ENCODE measurements at regions of chr5 and their contacts with region 1.

Region 1: GRCh38 chr5:54310433-54311175 is at the start of gene ARL15:
- DNase-seq: peak; percentile 98
- CTCF ChIP-seq: no peak

Region 2: GRCh38 chr5:53913941-53914340 is 396.7 kb before region 1 on chr5:
- CTCF ChIA-PET with region 1: no interaction called
- POLR2A ChIA-PET with region 1: no interaction called
- DNase-seq: no peak
- CTCF ChIP-seq: no peak

Region 3: DNA sequence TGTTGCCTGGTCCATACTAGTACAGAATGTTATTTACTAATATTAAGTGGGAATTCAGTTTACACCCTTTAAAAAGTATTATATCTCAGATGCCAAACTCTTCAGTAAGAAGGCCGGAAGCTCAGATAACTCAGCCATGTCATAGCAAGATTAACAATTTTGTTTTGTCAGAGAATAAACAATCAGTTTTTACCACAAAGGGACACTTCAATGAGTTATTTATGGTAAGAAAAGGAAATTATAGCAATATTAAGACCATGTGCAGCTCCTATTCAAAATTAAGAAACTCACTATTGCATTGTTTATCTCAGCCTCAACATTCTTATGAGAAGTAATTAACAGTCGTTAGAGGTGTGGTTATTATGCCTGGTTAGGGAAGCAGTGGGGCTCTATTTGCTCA is 12.9 kb after region 1 on chr5:
- CTCF ChIA-PET with region 1: interaction called, 14 read pairs
- POLR2A ChIA-PET with region 1: interaction called, 9 read pairs
- DNase-seq: no peak
- CTCF ChIP-seq: no peak

Measured in GM10248 (cell line).